Activated CD4-positive, alpha-beta T cell treated with anti-CD3 and anti-CD28 coated beads for 36 hours (primary cell): ENCODE measurements at regions of chr19 and their contacts with region 1.

Region 1: DNA sequence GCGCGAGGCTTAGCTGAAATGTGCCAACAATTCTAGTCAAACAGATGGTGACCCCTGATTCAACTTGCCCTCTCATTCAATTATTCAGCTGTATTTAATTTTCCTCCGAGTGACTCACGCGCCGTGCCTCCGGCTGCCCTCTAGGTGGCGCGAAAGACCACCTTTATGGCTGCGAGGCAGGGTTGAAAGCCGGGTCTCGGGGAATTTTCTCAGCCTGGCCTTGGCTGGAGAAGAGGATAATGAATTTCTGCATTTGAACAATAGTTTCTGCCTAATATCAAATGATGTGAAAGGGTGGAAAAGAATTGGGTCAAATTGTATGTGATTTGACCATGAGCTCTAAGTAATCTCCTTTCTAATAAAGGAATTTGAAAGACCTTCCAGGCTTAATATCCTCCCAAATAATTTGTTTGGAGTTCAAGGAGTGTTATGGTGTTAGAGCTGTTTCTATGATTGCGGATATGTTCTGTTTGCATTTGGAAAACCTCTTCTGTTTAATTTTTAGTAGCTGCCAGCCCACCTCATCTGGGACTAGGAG is 310.9 kb downstream of the ZNF536 start:
- DNase-seq: peak; percentile 76
- ATAC-seq: no peak
- H3K4me3 Mint-ChIP-seq: no peak overlapping the region
- H3K27ac Mint-ChIP-seq: no peak overlapping the region
- H3K4me1 Mint-ChIP-seq: no peaks in the 10 kb centered on the region
- H3K27me3 Mint-ChIP-seq: peaks cover 28% of the 10 kb centered on the region

Region 2: DNA sequence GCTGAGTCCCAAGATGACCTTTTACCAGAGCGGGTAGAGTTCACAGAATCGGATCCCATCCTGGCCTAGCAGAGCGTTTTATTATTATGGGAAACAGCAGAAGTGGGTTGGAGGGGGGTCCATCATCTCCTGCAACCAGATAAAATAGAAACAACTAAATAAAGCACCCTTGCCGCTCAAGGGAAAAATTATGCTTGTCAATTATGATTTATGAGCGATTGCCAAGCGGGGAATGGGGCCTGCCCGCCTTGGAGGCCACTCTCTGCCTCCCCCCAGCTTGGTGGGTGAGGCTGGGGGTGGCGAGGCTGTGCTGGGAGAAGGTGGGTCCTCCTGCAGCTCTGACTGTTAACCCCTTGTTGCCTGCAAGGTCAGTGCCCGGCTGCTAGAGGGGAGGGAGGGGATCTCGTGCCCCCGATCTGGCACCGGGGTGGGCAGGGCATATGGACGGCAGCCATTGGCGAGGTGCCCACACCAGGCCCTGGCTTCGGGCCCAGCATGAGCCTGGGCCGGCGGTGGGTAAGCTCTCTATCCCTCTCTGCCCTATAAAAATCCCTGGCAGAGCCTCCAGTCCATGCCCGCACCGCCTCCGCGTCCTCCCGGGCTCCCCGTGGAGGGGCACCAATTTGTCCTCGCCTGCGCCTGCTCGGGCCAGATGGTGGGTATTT is 612.0 kb before region 1 on chr19:
- CTCF ChIA-PET with region 1: no interaction called
- POLR2A ChIA-PET with region 1: no interaction called
- intact Hi-C with region 1: no loop called
- DNase-seq: no peak
- ATAC-seq: no peak
- H3K4me3 Mint-ChIP-seq: no peak overlapping the region
- H3K27ac Mint-ChIP-seq: no peak overlapping the region
- H3K4me1 Mint-ChIP-seq: no peaks in the 10 kb centered on the region
- H3K27me3 Mint-ChIP-seq: peaks cover 2% of the 10 kb centered on the region

Region 3: GRCh38 chr19:30402436-30403202 is 280.4 kb before region 1 on chr19:
- CTCF ChIA-PET with region 1: no interaction called
- POLR2A ChIA-PET with region 1: no interaction called
- intact Hi-C with region 1: no loop called
- DNase-seq: no peak
- ATAC-seq: no peak
- H3K4me3 Mint-ChIP-seq: no peak overlapping the region
- H3K27ac Mint-ChIP-seq: no peak overlapping the region
- H3K4me1 Mint-ChIP-seq: no peaks in the 10 kb centered on the region
- H3K27me3 Mint-ChIP-seq: peaks cover 6% of the 10 kb centered on the region

Region 4: DNA sequence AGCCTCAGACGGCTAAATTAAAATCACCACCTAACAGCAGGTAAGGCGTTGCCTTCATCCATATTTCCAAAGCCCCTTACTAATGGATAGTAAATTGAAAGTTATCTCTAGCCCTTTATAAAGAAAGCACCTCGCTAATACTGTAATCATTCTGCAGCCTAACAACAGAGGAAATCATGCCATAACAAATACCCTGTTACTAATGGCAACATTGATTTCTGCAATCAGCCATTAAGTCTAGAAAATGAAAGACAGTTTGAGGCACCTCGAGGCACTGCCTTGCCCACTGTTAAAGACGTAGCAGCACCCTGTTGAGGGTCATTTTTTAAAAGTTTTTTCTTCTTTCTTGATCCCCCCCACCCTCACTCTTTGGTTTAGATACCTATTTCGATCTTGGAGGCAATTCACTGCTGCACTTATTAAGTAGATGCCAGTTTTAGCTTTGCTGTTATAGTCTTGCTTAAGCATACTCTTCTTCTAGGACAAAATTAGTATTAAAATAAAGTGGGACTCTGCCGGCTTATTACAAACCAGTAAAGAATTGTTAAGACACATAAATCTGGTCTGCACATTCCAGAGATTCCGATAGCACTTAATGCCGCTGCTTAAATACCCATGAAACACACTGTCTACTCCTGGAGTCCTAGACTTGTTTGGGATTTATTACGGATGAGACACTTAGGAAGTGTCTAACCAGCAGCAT is 236.1 kb before region 1 on chr19:
- CTCF ChIA-PET with region 1: no interaction called
- POLR2A ChIA-PET with region 1: no interaction called
- intact Hi-C with region 1: no loop called
- DNase-seq: no peak
- ATAC-seq: no peak
- H3K4me3 Mint-ChIP-seq: no peak overlapping the region
- H3K27ac Mint-ChIP-seq: no peak overlapping the region
- H3K4me1 Mint-ChIP-seq: no peaks in the 10 kb centered on the region
- H3K27me3 Mint-ChIP-seq: peaks cover 3% of the 10 kb centered on the region

Region 5: GRCh38 chr19:30696514-30696913 is 13.4 kb after region 1 on chr19:
- CTCF ChIA-PET with region 1: interaction called, 12 read pairs
- POLR2A ChIA-PET with region 1: no interaction called
- intact Hi-C with region 1: no loop called
- DNase-seq: peak; percentile 49
- ATAC-seq: peak; percentile 51
- H3K4me3 Mint-ChIP-seq: no peak overlapping the region
- H3K27ac Mint-ChIP-seq: no peak overlapping the region
- H3K4me1 Mint-ChIP-seq: peaks cover 5% of the 10 kb centered on the region
- H3K27me3 Mint-ChIP-seq: peaks cover 19% of the 10 kb centered on the region

Region 6: GRCh38 chr19:30719189-30719998 is 36.3 kb after region 1 on chr19:
- CTCF ChIA-PET with region 1: no interaction called
- POLR2A ChIA-PET with region 1: no interaction called
- intact Hi-C with region 1: no loop called
- DNase-seq: peak; percentile 43
- ATAC-seq: peak; percentile 61
- H3K4me3 Mint-ChIP-seq: peak overlapping the region; percentile 57
- H3K27ac Mint-ChIP-seq: no peak overlapping the region
- H3K4me1 Mint-ChIP-seq: no peaks in the 10 kb centered on the region
- H3K27me3 Mint-ChIP-seq: peaks cover 23% of the 10 kb centered on the region

Region 7: DNA sequence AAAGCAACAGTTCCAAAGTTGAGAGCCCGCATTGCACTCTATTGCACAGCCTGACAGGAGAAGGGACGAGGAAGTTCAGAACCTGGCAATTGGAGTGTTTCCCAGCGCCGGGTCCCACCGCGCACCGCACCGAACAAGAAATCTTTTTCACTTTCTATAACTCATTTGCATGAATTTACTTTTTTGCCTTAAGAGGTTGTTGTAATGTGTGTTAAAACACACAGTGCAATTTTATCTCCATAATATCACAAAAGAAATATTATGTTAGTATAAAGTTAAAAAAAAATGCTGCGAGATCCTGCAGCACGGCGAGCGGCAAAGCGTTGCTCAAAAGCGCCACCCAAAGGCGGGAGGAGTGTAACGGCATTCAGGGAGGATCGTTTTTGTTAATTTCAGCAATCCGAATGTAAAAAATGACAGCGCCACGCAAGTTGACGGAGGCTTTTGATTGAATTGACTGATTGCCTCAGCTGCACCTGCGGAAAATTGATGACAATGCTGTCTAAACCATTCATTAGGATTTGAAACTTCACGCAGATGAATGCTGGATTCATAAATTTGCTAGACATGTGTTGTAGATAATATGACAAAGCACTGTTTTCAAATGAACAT is 1358.7 kb after region 1 on chr19:
- CTCF ChIA-PET with region 1: interaction called, 3 read pairs
- POLR2A ChIA-PET with region 1: no interaction called
- intact Hi-C with region 1: loop called in 1 of 2 experiments (anchors 5 kb)
- DNase-seq: peak; percentile 71
- ATAC-seq: peak; percentile 26
- H3K4me3 Mint-ChIP-seq: no peak overlapping the region
- H3K27ac Mint-ChIP-seq: no peak overlapping the region
- H3K4me1 Mint-ChIP-seq: no peaks in the 10 kb centered on the region
- H3K27me3 Mint-ChIP-seq: peaks cover 26% of the 10 kb centered on the region